ENCODE measurements at regions of chr2 and their contacts with region 1.

Region 1: GRCh38 chr2:177263451-177264208 is 897 bp downstream of the NFE2L2 start:
- DNase-seq: peak; percentile 86
- ATAC-seq: peak; percentile 71
- H3K4me3 ChIP-seq: peak overlapping the region; percentile 69 to 75
- H3K27ac ChIP-seq: peak overlapping the region; percentile 94
- H3K4me1 ChIP-seq: peaks cover 47% of the 10 kb centered on the region
- H3K27me3 ChIP-seq: no peaks in the 10 kb centered on the region
- CTCF ChIP-seq: peak; percentile 93

Region 2: GRCh38 chr2:176814306-176815052 is 449.2 kb before region 1 on chr2:
- CTCF ChIA-PET with region 1: no interaction called
- POLR2A ChIA-PET with region 1: no interaction called
- in situ Hi-C with region 1: no loop called
- intact Hi-C with region 1: no loop called
- DNase-seq: peak; percentile 4
- ATAC-seq: no peak
- H3K4me3 ChIP-seq: no peak overlapping the region
- H3K27ac ChIP-seq: no peak overlapping the region
- H3K4me1 ChIP-seq: no peaks in the 10 kb centered on the region
- H3K27me3 ChIP-seq: no peaks in the 10 kb centered on the region
- CTCF ChIP-seq: peak; percentile 67; the same call in 1 of the 2 replicates

Region 3: DNA sequence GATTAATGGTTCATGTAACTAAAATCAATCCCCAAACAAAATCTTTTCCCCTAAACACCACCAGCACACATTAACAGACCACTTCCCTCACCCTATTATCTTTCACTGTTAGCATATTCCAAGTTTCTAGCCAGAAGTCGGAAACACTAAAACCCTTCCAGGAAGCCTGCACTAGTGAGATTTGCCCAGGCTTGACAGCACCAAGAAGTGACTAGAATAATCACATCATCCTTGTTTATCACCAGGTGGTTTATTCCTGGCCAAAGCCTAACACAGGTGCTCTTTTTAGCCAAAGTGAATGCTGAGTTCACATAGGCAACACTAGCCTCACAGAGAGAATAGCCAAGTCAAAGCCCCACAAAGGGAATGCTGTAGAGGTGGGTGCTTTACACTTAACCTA is 272.2 kb before region 1 on chr2:
- CTCF ChIA-PET with region 1: no interaction called
- POLR2A ChIA-PET with region 1: no interaction called
- in situ Hi-C with region 1: no loop called
- intact Hi-C with region 1: no loop called
- DNase-seq: no peak
- ATAC-seq: no peak
- H3K4me3 ChIP-seq: no peak overlapping the region
- H3K27ac ChIP-seq: no peak overlapping the region
- H3K4me1 ChIP-seq: no peaks in the 10 kb centered on the region
- H3K27me3 ChIP-seq: no peaks in the 10 kb centered on the region
- CTCF ChIP-seq: no peak

Region 4: DNA sequence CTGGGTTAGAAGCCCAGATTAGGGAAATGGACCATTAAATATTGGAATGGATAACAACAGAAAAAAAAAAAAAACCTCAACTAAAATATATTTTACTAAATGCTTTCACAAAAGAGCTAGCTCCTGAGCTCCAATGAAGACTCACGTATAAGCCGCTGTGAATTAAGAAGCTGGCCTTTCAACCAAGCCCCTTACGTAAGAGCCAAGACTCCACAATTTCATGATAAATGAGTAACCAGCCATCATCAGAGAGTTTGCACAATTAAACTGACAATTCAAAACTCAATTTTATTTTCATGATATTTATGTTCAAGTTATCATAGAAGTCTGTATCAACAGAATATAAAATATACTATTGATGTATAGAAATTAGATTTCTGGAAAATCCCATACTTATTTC is 121.8 kb before region 1 on chr2:
- CTCF ChIA-PET with region 1: no interaction called
- POLR2A ChIA-PET with region 1: no interaction called
- in situ Hi-C with region 1: no loop called
- intact Hi-C with region 1: no loop called
- DNase-seq: no peak
- ATAC-seq: no peak
- H3K4me3 ChIP-seq: no peak overlapping the region
- H3K27ac ChIP-seq: no peak overlapping the region
- H3K4me1 ChIP-seq: no peaks in the 10 kb centered on the region
- H3K27me3 ChIP-seq: peaks cover 13% of the 10 kb centered on the region
- CTCF ChIP-seq: no peak

Region 5: DNA sequence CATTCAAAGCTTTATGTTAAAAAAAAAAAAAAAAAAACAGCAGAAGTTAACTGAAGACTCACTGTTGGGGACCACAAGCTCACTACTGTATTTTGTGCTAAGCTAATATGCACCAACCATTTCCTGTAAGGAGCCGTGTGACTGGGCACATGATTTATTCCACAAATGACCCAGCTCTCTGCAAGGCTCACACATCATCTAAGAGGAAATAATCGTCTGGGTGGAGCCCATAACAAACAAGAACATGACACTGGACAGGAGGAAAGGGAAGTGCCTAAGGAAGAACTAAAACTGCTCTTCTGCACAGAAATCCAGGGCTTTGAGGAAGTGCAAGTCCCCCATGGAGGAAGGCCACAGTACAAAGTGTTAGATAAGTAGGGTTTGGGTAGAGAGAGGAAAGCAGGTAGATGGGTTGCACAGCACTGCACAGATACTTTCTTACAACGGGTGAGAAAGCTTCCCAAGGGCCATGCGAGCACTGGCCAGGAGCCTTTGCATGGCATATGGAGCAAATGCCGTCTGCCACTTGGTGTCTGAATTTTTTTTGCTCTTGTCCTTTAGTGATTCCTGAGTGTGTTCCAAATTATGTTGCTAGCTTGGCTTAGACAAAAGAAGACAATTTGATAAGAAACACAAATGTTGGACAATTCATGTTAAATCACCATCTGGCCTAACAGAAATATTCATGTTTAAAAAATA is 23.5 kb before region 1 on chr2:
- CTCF ChIA-PET with region 1: no interaction called
- POLR2A ChIA-PET with region 1: interaction called, 12 read pairs
- in situ Hi-C with region 1: no loop called
- intact Hi-C with region 1: no loop called
- DNase-seq: peak; percentile 66
- ATAC-seq: peak; percentile 31; the same call in 1 of the 2 replicates
- H3K4me3 ChIP-seq: peak overlapping the region in 1 of 2 experiments; percentile 15; a peak in 1 of 4 replicates
- H3K27ac ChIP-seq: peak overlapping the region; percentile 94
- H3K4me1 ChIP-seq: peaks cover 90% of the 10 kb centered on the region
- H3K27me3 ChIP-seq: no peaks in the 10 kb centered on the region
- CTCF ChIP-seq: no peak

Region 6: GRCh38 chr2:177275041-177276020 is 11.7 kb after region 1 on chr2:
- CTCF ChIA-PET with region 1: no interaction called
- POLR2A ChIA-PET with region 1: interaction called, 15 read pairs
- in situ Hi-C with region 1: no loop called
- intact Hi-C with region 1: no loop called
- DNase-seq: no peak
- ATAC-seq: peak; percentile 71
- H3K4me3 ChIP-seq: peak overlapping the region in 1 of 2 experiments; percentile 12; a peak in 2 of 4 replicates
- H3K27ac ChIP-seq: peak overlapping the region; percentile 99
- H3K4me1 ChIP-seq: peaks cover 39% of the 10 kb centered on the region
- H3K27me3 ChIP-seq: no peaks in the 10 kb centered on the region
- CTCF ChIP-seq: no peak

Region 7: GRCh38 chr2:177332041-177332991 is 68.7 kb after region 1 on chr2:
- CTCF ChIA-PET with region 1: no interaction called
- POLR2A ChIA-PET with region 1: interaction called, 5 read pairs
- in situ Hi-C with region 1: no loop called
- intact Hi-C with region 1: loop called (anchors 2 kb)
- DNase-seq: peak; percentile 46
- ATAC-seq: peak; percentile 80
- H3K4me3 ChIP-seq: no peak overlapping the region
- H3K27ac ChIP-seq: peak overlapping the region; percentile 69
- H3K4me1 ChIP-seq: peaks cover 14% of the 10 kb centered on the region
- H3K27me3 ChIP-seq: no peaks in the 10 kb centered on the region
- CTCF ChIP-seq: peak; percentile 77

Region 8: DNA sequence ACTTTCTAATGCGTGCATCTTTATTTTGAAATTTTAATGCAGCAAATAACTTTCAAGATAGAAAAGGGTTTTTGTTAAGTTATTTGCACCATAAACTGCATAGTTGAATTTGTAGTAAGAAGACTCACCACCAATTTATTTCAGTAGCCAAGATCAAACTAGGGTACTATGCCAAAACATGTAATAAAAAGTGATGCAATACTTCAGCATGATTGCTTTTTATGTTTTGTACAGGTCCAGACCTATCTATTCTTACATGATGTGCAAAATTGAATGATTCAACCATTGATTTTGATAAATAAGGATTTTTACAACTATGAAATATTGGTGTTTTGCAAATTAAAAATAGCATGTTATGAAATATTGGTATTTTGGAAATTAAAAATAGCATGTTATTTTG is 155.6 kb after region 1 on chr2:
- CTCF ChIA-PET with region 1: no interaction called
- POLR2A ChIA-PET with region 1: no interaction called
- in situ Hi-C with region 1: no loop called
- intact Hi-C with region 1: loop called (anchors 2 kb)
- DNase-seq: no peak
- ATAC-seq: no peak
- H3K4me3 ChIP-seq: no peak overlapping the region
- H3K27ac ChIP-seq: peak overlapping the region; percentile 78; the same call in 1 of the 2 replicates
- H3K4me1 ChIP-seq: peaks cover 11% of the 10 kb centered on the region; the same call in 1 of the 2 replicates
- H3K27me3 ChIP-seq: no peaks in the 10 kb centered on the region
- CTCF ChIP-seq: no peak